IMR-90 (cell line): ENCODE measurements at regions of chr22 and their contacts with region 1.

Region 1: GRCh38 chr22:21938071-21938822 is 14.4 kb downstream of the PPM1F start:
- DNase-seq: peak; percentile 83
- ATAC-seq: peak; percentile 86
- H3K4me3 ChIP-seq: peak overlapping the region; percentile 46
- H3K27ac ChIP-seq: peak overlapping the region; percentile 87
- H3K4me1 ChIP-seq: peaks cover 29% of the 10 kb centered on the region
- H3K27me3 ChIP-seq: no peaks in the 10 kb centered on the region
- CTCF ChIP-seq: peak; percentile 99
- POLR2A ChIP-seq: no peak; the same call in 1 of the 2 replicates
- RAD21 ChIP-seq: peak; percentile 90

Region 2: GRCh38 chr22:21666786-21667185 is 271.5 kb before region 1 on chr22:
- CTCF ChIA-PET with region 1: no interaction called
- POLR2A ChIA-PET with region 1: no interaction called
- dilution Hi-C with region 1: no loop called
- in situ Hi-C with region 1: no loop called
- intact Hi-C with region 1: loop called (anchors 5 kb)
- DNase-seq: no peak
- ATAC-seq: no peak
- H3K4me3 ChIP-seq: peak overlapping the region; percentile 21
- H3K27ac ChIP-seq: no peak overlapping the region
- H3K4me1 ChIP-seq: peaks cover 2% of the 10 kb centered on the region
- H3K27me3 ChIP-seq: no peaks in the 10 kb centered on the region
- CTCF ChIP-seq: no peak
- POLR2A ChIP-seq: no peak
- RAD21 ChIP-seq: no peak

Region 3: GRCh38 chr22:21712894-21713712 is 225.1 kb before region 1 on chr22:
- CTCF ChIA-PET with region 1: interaction called, 5 read pairs
- POLR2A ChIA-PET with region 1: no interaction called
- dilution Hi-C with region 1: no loop called
- in situ Hi-C with region 1: loop called (anchors 5 kb)
- intact Hi-C with region 1: loop called (anchors 1 kb)
- DNase-seq: peak; percentile 78
- ATAC-seq: peak; percentile 98
- H3K4me3 ChIP-seq: no peak overlapping the region
- H3K27ac ChIP-seq: no peak overlapping the region
- H3K4me1 ChIP-seq: peaks cover 3% of the 10 kb centered on the region
- H3K27me3 ChIP-seq: no peaks in the 10 kb centered on the region
- CTCF ChIP-seq: peak; percentile 86
- POLR2A ChIP-seq: 0 out of 2 replicates have a peak, but pooled peaks have one; percentile 42
- RAD21 ChIP-seq: peak; percentile 91

Region 4: DNA sequence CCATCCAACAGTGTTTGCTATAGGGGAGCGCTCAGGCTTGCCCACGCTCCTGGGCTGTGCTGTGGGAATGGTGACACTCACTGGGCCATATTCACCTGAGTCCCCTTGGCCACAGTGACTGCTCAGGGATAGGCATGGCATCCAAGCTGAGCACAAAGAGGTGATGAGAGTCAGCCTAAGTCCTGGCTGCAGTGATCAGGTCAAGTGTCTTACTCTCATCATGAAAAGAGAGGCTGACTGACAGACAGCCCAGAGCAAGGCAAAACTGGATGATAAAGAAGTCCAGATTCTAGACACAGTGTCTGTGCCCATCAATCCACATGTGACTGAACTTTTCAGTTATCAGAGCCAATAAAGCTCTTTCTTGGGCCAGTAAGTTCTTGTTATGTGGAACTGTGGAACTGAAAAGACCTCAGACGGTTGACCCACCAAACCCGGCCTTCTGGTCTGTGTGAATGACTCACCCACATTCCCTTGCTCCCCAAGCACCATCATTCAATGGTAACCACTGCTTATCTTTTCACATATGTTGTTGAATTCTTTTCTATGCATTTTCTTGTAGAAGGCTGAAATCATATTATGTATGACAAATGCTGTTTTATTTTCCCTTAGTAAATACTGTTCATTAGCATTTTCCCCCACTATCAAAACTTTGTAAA is 159.4 kb before region 1 on chr22:
- CTCF ChIA-PET with region 1: no interaction called
- POLR2A ChIA-PET with region 1: no interaction called
- dilution Hi-C with region 1: no loop called
- in situ Hi-C with region 1: no loop called
- intact Hi-C with region 1: loop called (anchors 1 kb)
- DNase-seq: peak; percentile 90
- ATAC-seq: peak; percentile 95
- H3K4me3 ChIP-seq: no peak overlapping the region
- H3K27ac ChIP-seq: peak overlapping the region; percentile 26; the same call in 1 of the 2 replicates
- H3K4me1 ChIP-seq: peaks cover 6% of the 10 kb centered on the region
- H3K27me3 ChIP-seq: no peaks in the 10 kb centered on the region
- CTCF ChIP-seq: no peak
- POLR2A ChIP-seq: no peak
- RAD21 ChIP-seq: peak; percentile 30; the same call in 1 of the 2 replicates

Region 5: GRCh38 chr22:21867528-21868266 is 70.5 kb before region 1 on chr22 and contains the start of gene MAPK1:
- CTCF ChIA-PET with region 1: interaction called, 3 read pairs
- POLR2A ChIA-PET with region 1: no interaction called
- dilution Hi-C with region 1: no loop called
- in situ Hi-C with region 1: no loop called
- intact Hi-C with region 1: loop called (anchors 5 kb)
- DNase-seq: peak; percentile 81
- ATAC-seq: peak; percentile 99
- H3K4me3 ChIP-seq: peak within 1 kb of the TSS; percentile 96
- H3K27ac ChIP-seq: peak within 1 kb of the TSS; percentile 88
- H3K4me1 ChIP-seq: no peaks in the 10 kb centered on the region; the same call in 1 of the 2 replicates
- H3K27me3 ChIP-seq: no peaks in the 10 kb centered on the region
- CTCF ChIP-seq: peak; percentile 31; the same call in 1 of the 2 replicates
- POLR2A ChIP-seq: peak; percentile 86
- RAD21 ChIP-seq: no peak
- total RNA-seq, gene MAPK1: 44.7 and 51.3 TPM in 2 replicates

Region 6: GRCh38 chr22:21917181-21917958 is 20.9 kb before region 1 on chr22:
- CTCF ChIA-PET with region 1: no interaction called
- POLR2A ChIA-PET with region 1: no interaction called
- dilution Hi-C with region 1: no loop called
- in situ Hi-C with region 1: no loop called
- intact Hi-C with region 1: no loop called
- DNase-seq: no peak
- ATAC-seq: peak; percentile 42; the same call in 1 of the 2 replicates
- H3K4me3 ChIP-seq: no peak overlapping the region
- H3K27ac ChIP-seq: no peak overlapping the region
- H3K4me1 ChIP-seq: peaks cover 10% of the 10 kb centered on the region
- H3K27me3 ChIP-seq: no peaks in the 10 kb centered on the region
- CTCF ChIP-seq: no peak
- POLR2A ChIP-seq: no peak
- RAD21 ChIP-seq: no peak

Region 7: DNA sequence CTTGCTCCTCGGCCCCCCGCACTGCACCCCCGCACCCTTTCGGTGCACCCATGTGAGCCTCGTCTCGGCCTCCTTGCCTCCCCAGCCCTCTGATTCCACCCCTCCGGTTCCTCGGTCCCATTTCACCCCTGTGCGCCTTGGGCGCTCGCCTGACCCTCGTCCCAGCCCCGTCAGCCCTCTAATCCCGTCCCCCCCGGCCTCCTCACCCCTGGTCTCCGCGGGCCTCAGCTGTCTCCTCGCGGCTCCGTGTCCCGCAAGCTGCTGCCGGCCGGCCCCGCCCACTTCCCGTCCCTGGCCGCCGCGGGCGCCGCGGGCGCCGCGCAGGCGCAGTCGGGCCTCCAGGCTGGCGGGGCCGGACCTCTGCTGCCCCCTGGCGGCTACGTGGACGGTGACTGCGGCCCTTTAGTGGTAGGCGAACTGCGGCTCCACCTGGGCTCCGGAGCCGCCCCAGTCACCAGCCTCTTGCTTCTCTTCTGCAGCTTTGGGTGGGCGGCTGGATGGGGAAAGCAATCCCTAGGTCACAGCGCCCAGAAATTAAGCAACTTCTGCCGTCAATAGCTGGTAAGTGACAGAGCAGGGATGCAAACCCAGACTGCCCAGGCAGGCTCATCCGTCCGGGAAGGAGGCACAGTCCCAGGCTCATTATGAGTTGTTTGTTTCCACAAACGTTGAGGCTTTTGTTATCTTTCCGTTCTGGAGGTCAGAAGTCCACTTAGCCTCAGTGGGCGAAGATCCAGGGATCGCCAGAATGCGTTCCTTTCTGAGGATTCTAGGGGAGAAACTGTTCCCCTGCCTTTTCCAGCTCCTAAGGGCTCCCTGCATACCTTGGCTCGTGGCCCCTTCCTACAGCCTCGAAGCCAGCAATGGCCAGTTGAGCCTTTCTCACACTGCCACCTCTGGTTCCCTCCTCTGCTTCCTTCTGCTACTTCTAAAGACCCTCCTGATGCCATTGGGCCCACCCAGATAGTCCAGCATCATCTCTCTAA is 14.6 kb after region 1 on chr22 and contains the start of gene PPM1F:
- CTCF ChIA-PET with region 1: interaction called, 12 read pairs
- POLR2A ChIA-PET with region 1: no interaction called
- dilution Hi-C with region 1: no loop called
- in situ Hi-C with region 1: no loop called
- intact Hi-C with region 1: no loop called
- DNase-seq: peak; percentile 55
- ATAC-seq: peak; percentile 83
- H3K4me3 ChIP-seq: peak within 1 kb of the TSS; percentile 86
- H3K27ac ChIP-seq: peak within 1 kb of the TSS; percentile 92
- H3K4me1 ChIP-seq: peaks cover 7% of the 10 kb centered on the region; the same call in 1 of the 2 replicates
- H3K27me3 ChIP-seq: no peaks in the 10 kb centered on the region
- CTCF ChIP-seq: peak; percentile 91
- POLR2A ChIP-seq: 0 out of 2 replicates have a peak, but pooled peaks have one; percentile 16
- RAD21 ChIP-seq: peak; percentile 70
- total RNA-seq, gene PPM1F: 20.8 and 25.0 TPM in 2 replicates